Naive thymus-derived CD4-positive, alpha-beta T cell (primary cell): ENCODE measurements at regions of chr2 and their contacts with region 1.

Region 1: GRCh38 chr2:119929537-119929936 is 83.3 kb upstream of the EPB41L5 start:
- DNase-seq: peak in 7 of 9 donors; percentile 36 to 72 (median 57)
- ATAC-seq: peak; percentile 90
- H3K4me3 ChIP-seq: peak overlapping the region; percentile 53
- H3K4me3 Mint-ChIP-seq: peak overlapping the region; percentile 61 to 93 (median 85)
- H3K27ac ChIP-seq: peak overlapping the region; percentile 76
- H3K27ac Mint-ChIP-seq: peak overlapping the region; percentile 88 to 98 (median 93)
- H3K4me1 ChIP-seq: peaks cover 34 to 60% of the 10 kb centered on the region in 2 donors
- H3K4me1 Mint-ChIP-seq: peaks cover 34 to 84% (median 75%) of the 10 kb centered on the region in 7 donors
- H3K27me3 ChIP-seq: no peaks in the 10 kb centered on the region
- H3K27me3 Mint-ChIP-seq: no peaks in the 10 kb centered on the region

Region 2: GRCh38 chr2:119694845-119695521 is 234.6 kb before region 1 on chr2:
- CTCF ChIA-PET with region 1: no interaction called
- POLR2A ChIA-PET with region 1: no interaction called
- intact Hi-C with region 1: loop called in 1 of 2 experiments (anchors 5 kb)
- DNase-seq: peak in 7 of 9 donors; percentile 62 to 79 (median 72)
- ATAC-seq: peak; percentile 74
- H3K4me3 ChIP-seq: peak overlapping the region; percentile 53
- H3K4me3 Mint-ChIP-seq: peak overlapping the region in 9 of 10 donors; percentile 74 to 91 (median 89)
- H3K27ac ChIP-seq: peak overlapping the region; percentile 56
- H3K27ac Mint-ChIP-seq: peak overlapping the region in 8 of 9 donors; percentile 83 to 97 (median 92)
- H3K4me1 ChIP-seq: peaks cover 0 to 50% of the 10 kb centered on the region in 2 donors
- H3K4me1 Mint-ChIP-seq: peaks cover 17 to 60% (median 55%) of the 10 kb centered on the region in 7 donors
- H3K27me3 ChIP-seq: no peaks in the 10 kb centered on the region
- H3K27me3 Mint-ChIP-seq: no peaks in the 10 kb centered on the region

Region 3: GRCh38 chr2:119862127-119862889 is 67.2 kb before region 1 on chr2:
- CTCF ChIA-PET with region 1: no interaction called
- POLR2A ChIA-PET with region 1: no interaction called
- intact Hi-C with region 1: loop called in 1 of 2 experiments (anchors 1 kb)
- DNase-seq: no peak
- ATAC-seq: no peak
- H3K4me3 ChIP-seq: no peak overlapping the region
- H3K4me3 Mint-ChIP-seq: peak overlapping the region in 2 of 10 donors; percentile 36 to 55
- H3K27ac ChIP-seq: no peak overlapping the region
- H3K27ac Mint-ChIP-seq: peak overlapping the region in 2 of 9 donors; percentile 37 to 79
- H3K4me1 ChIP-seq: peaks cover 14 to 15% of the 10 kb centered on the region in 2 donors
- H3K4me1 Mint-ChIP-seq: peaks cover 36 to 91% (median 84%) of the 10 kb centered on the region in 7 donors
- H3K27me3 ChIP-seq: no peaks in the 10 kb centered on the region
- H3K27me3 Mint-ChIP-seq: no peaks in the 10 kb centered on the region

Region 4: DNA sequence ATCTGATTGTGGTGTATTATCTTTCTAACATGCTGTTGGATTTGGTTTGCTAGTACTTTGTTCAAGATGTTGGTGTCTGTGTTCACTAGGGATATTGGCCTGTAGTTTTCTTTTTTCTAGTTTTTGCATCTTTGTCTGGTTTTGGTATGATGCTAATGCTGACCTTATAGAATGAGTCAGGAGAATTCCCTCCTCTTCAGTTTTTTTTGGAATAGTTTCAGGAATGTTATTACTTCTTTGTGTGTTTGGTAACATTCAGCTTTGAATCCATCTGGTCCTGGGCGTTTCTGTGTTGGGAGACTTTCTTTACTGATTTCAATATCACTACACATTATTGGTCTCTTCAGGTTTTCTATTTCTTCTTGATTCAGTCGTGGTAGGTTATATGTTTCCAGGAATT is 40.9 kb before region 1 on chr2:
- CTCF ChIA-PET with region 1: no interaction called
- POLR2A ChIA-PET with region 1: no interaction called
- intact Hi-C with region 1: loop called in 1 of 2 experiments (anchors 5 kb)
- DNase-seq: no peak
- ATAC-seq: no peak
- H3K4me3 ChIP-seq: no peak overlapping the region
- H3K4me3 Mint-ChIP-seq: no peak overlapping the region
- H3K27ac ChIP-seq: no peak overlapping the region
- H3K27ac Mint-ChIP-seq: no peak overlapping the region
- H3K4me1 ChIP-seq: no peaks in the 10 kb centered on the region
- H3K4me1 Mint-ChIP-seq: peaks cover 0 to 25% (median 4%) of the 10 kb centered on the region in 7 donors
- H3K27me3 ChIP-seq: no peaks in the 10 kb centered on the region
- H3K27me3 Mint-ChIP-seq: no peaks in the 10 kb centered on the region

Region 5: DNA sequence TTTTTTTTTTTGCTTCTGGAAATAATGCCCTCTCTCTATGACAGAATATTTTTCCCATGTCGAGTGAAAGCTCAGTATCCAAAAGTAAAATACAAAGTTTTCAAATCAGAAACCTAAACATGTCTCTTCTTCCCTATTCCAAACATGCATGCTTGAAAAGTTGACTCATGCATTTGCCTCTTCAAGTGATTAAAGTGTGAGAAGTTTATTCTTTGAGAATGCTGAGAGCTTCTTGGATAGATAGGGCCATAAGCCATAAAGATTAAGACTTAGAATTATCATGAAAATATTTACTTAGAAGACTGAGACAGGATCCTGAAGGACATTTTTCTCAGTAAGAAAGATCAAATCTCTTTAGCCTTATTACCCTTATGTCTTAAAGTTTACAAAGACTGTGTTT is 15.3 kb before region 1 on chr2:
- CTCF ChIA-PET with region 1: no interaction called
- POLR2A ChIA-PET with region 1: interaction called, 3 read pairs
- intact Hi-C with region 1: loop called in 1 of 2 experiments (anchors 1 kb)
- DNase-seq: no peak
- ATAC-seq: no peak
- H3K4me3 ChIP-seq: no peak overlapping the region
- H3K4me3 Mint-ChIP-seq: no peak overlapping the region
- H3K27ac ChIP-seq: no peak overlapping the region
- H3K27ac Mint-ChIP-seq: peak overlapping the region in 2 of 9 donors; percentile 43 to 47
- H3K4me1 ChIP-seq: no peaks in the 10 kb centered on the region
- H3K4me1 Mint-ChIP-seq: peaks cover 0 to 10% (median 3%) of the 10 kb centered on the region in 7 donors
- H3K27me3 ChIP-seq: no peaks in the 10 kb centered on the region
- H3K27me3 Mint-ChIP-seq: no peaks in the 10 kb centered on the region

Region 6: GRCh38 chr2:119943058-119943457 is 13.5 kb after region 1 on chr2:
- CTCF ChIA-PET with region 1: interaction called, 4 read pairs
- POLR2A ChIA-PET with region 1: interaction called, 3 read pairs
- intact Hi-C with region 1: loop called in 1 of 2 experiments (anchors 2 kb)
- DNase-seq: no peak
- ATAC-seq: no peak
- H3K4me3 ChIP-seq: no peak overlapping the region
- H3K4me3 Mint-ChIP-seq: peak overlapping the region in 1 of 10 donors; percentile 11
- H3K27ac ChIP-seq: no peak overlapping the region
- H3K27ac Mint-ChIP-seq: peak overlapping the region in 4 of 9 donors; percentile 20 to 77 (median 32)
- H3K4me1 ChIP-seq: peaks cover 4 to 43% of the 10 kb centered on the region in 2 donors
- H3K4me1 Mint-ChIP-seq: peaks cover 12 to 70% (median 37%) of the 10 kb centered on the region in 7 donors
- H3K27me3 ChIP-seq: no peaks in the 10 kb centered on the region
- H3K27me3 Mint-ChIP-seq: no peaks in the 10 kb centered on the region